ENCODE measurements at regions of chr19 and their contacts with region 1.

Region 1: DNA sequence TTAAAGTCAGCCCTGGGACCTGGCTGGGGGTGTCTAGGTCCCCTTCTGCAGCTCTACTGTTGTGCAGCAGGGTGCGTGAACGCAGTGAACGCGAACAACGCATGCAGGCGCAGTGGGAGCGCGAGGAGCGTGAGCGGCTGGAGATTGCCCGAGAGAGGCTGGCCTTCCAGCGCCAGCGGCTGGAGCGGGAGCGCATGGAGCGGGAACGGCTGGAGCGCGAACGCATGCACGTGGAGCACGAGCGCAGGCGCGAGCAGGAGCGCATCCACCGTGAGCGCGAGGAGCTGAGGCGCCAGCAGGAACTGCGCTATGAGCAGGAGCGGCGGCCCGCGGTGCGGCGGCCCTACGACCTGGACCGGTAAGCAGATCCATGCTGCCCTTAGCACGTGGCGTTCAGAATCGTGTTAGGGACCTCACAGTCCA is 18.9 kb downstream of the MICOS13 start:
- DNase-seq: no peak
- CTCF ChIP-seq: no peak

Region 2: DNA sequence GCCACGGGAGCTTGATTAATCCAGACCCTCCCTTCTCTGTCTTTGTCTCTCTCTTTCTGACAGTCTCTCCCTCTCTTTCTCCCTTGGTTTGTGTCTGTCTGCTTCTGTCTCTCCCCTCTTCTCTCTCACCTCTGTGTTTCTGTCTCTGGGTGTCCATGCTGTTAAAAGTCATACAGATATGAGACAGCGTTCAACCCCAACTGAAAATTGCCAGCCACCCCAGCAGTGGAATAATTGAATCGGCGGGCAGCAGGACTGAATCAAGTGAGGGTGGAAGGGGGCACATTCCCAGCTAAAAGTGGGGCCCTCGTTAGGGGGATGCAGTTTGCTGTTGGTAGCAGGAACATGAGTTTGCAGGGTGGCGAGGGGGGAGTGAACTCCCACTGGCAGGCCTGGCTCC is 137.4 kb before region 1 on chr19:
- CTCF ChIA-PET with region 1: no interaction called
- POLR2A ChIA-PET with region 1: no interaction called
- DNase-seq: no peak
- CTCF ChIP-seq: no peak

Region 3: GRCh38 chr19:5632657-5633056 is 28.8 kb before region 1 on chr19:
- CTCF ChIA-PET with region 1: interaction called, 3 read pairs
- POLR2A ChIA-PET with region 1: interaction called, 10 read pairs
- DNase-seq: no peak
- CTCF ChIP-seq: no peak

Measured in GM10248 (cell line).